Panc1 (cell line): ENCODE measurements at regions of chr2 and their contacts with region 1.

Region 1: GRCh38 chr2:18332477-18332876 is 228.0 kb downstream of the RDH14 start:
- DNase-seq: no peak
- ATAC-seq: no peak
- H3K4me3 ChIP-seq: no peak overlapping the region
- H3K27ac ChIP-seq: no peak overlapping the region
- H3K4me1 ChIP-seq: no peaks in the 10 kb centered on the region
- H3K27me3 ChIP-seq: no peaks in the 10 kb centered on the region
- CTCF ChIP-seq: no peak

Region 2: GRCh38 chr2:17608251-17608650 is 724.2 kb before region 1 on chr2:
- CTCF ChIA-PET with region 1: no interaction called
- POLR2A ChIA-PET with region 1: no interaction called
- in situ Hi-C with region 1: no loop called
- intact Hi-C with region 1: no loop called
- DNase-seq: no peak
- ATAC-seq: no peak
- H3K4me3 ChIP-seq: no peak overlapping the region
- H3K27ac ChIP-seq: no peak overlapping the region
- H3K4me1 ChIP-seq: no peaks in the 10 kb centered on the region
- H3K27me3 ChIP-seq: no peaks in the 10 kb centered on the region; the same call in 1 of the 2 replicates
- CTCF ChIP-seq: no peak

Region 3: GRCh38 chr2:18265614-18266587 is 66.6 kb before region 1 on chr2:
- CTCF ChIA-PET with region 1: no interaction called
- POLR2A ChIA-PET with region 1: no interaction called
- in situ Hi-C with region 1: no loop called
- intact Hi-C with region 1: no loop called
- DNase-seq: no peak
- ATAC-seq: no peak
- H3K4me3 ChIP-seq: no peak overlapping the region
- H3K27ac ChIP-seq: no peak overlapping the region
- H3K4me1 ChIP-seq: no peaks in the 10 kb centered on the region
- H3K27me3 ChIP-seq: no peaks in the 10 kb centered on the region
- CTCF ChIP-seq: peak; percentile 31

Region 4: GRCh38 chr2:18501156-18501555 is 168.7 kb after region 1 on chr2:
- CTCF ChIA-PET with region 1: no interaction called
- POLR2A ChIA-PET with region 1: interaction called, 30 read pairs
- in situ Hi-C with region 1: no loop called
- intact Hi-C with region 1: no loop called
- DNase-seq: no peak
- ATAC-seq: no peak
- H3K4me3 ChIP-seq: no peak overlapping the region
- H3K27ac ChIP-seq: no peak overlapping the region
- H3K4me1 ChIP-seq: no peaks in the 10 kb centered on the region
- H3K27me3 ChIP-seq: no peaks in the 10 kb centered on the region
- CTCF ChIP-seq: no peak

Region 5: DNA sequence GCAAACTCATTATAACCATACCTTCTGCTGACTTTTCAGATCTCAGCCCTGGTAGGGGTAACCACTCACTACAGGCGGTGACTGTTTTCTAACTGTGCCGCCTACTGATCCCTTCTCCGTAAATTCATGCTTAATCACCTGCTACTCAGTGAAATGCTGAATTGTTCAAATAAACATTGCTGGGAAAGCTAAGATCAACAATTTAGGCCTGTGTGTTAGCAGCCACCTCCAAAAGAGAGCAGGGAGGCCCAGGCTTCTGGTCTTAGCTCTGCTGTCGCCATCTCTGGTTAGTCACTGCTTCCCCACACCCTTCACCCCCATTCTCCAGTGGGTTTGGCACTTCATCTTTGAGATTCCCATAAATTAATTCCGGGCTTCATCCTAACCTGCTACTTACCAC is 278.7 kb after region 1 on chr2:
- CTCF ChIA-PET with region 1: no interaction called
- POLR2A ChIA-PET with region 1: no interaction called
- in situ Hi-C with region 1: no loop called
- intact Hi-C with region 1: no loop called
- DNase-seq: no peak
- ATAC-seq: no peak
- H3K4me3 ChIP-seq: no peak overlapping the region
- H3K27ac ChIP-seq: no peak overlapping the region
- H3K4me1 ChIP-seq: no peaks in the 10 kb centered on the region
- H3K27me3 ChIP-seq: no peaks in the 10 kb centered on the region
- CTCF ChIP-seq: no peak